Activated CD4-positive, alpha-beta T cell treated with anti-CD3 and anti-CD28 coated beads, Interleukin-2, amount 10 ng/mL, durations not matched to agents 24 days and 14 days (primary cell): ENCODE measurements at regions of chr14 and their contacts with region 1.

Region 1: GRCh38 chr14:36520601-36521525 is 831 bp upstream of the NKX2-1 start:
- DNase-seq: no peak
- H3K4me3 Mint-ChIP-seq: no peak overlapping the region
- H3K27ac Mint-ChIP-seq: no peak overlapping the region
- H3K4me1 Mint-ChIP-seq: peaks cover 2% of the 10 kb centered on the region
- H3K27me3 Mint-ChIP-seq: peaks cover 71% of the 10 kb centered on the region

Region 2: DNA sequence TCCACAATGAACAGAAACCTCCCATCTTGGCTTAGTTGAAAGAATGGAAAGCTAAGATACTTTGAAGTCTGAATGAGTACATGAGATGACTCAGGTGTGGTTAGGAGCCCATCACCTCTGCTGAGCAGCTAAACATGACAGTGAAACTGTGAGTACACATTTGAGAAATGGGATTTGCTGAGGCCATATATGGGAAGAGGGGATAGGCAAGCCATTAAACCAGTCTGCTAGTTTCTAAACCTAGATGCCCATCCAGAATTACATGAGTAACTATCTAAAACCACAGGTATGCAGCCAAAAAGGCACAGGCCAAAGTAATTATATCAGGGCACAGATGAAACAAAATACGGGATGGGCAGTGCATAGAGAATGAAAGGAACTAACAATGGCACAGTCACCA is 42.1 kb before region 1 on chr14:
- intact Hi-C with region 1: no loop called
- DNase-seq: no peak
- H3K4me3 Mint-ChIP-seq: no peak overlapping the region
- H3K27ac Mint-ChIP-seq: no peak overlapping the region
- H3K4me1 Mint-ChIP-seq: peaks cover 1% of the 10 kb centered on the region
- H3K27me3 Mint-ChIP-seq: peaks cover 5% of the 10 kb centered on the region

Region 3: GRCh38 chr14:36505181-36505815 is 15.6 kb before region 1 on chr14:
- intact Hi-C with region 1: loop called (anchors 2 kb)
- DNase-seq: no peak
- H3K4me3 Mint-ChIP-seq: no peak overlapping the region
- H3K27ac Mint-ChIP-seq: no peak overlapping the region
- H3K4me1 Mint-ChIP-seq: peaks cover 4% of the 10 kb centered on the region
- H3K27me3 Mint-ChIP-seq: peaks cover 80% of the 10 kb centered on the region

Region 4: DNA sequence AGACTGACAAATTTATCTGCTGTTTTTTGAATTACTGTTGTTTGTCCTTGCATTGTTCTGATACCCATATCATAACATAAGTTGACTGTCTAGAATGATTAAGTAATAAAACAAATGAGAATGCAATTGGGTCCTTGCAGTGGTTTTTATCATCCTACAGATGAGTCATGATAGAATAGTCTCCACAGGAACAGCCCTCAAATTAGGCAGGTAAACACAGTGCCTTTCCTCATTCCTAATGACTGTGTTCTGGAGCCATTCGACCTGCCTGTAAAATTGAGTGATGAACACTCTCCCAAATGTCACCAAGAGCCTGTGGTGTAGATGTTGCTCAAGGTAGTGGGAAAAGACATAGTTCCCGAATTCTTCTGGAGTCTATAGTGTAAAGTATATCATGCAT is 49.2 kb after region 1 on chr14:
- intact Hi-C with region 1: no loop called
- DNase-seq: no peak
- H3K4me3 Mint-ChIP-seq: no peak overlapping the region
- H3K27ac Mint-ChIP-seq: no peak overlapping the region
- H3K4me1 Mint-ChIP-seq: no peaks in the 10 kb centered on the region
- H3K27me3 Mint-ChIP-seq: peaks cover 5% of the 10 kb centered on the region

Region 5: GRCh38 chr14:36655963-36656686 is 135.3 kb after region 1 on chr14:
- intact Hi-C with region 1: loop called (anchors 2 kb)
- DNase-seq: peak; percentile 59
- H3K4me3 Mint-ChIP-seq: no peak overlapping the region
- H3K27ac Mint-ChIP-seq: no peak overlapping the region
- H3K4me1 Mint-ChIP-seq: peaks cover 7% of the 10 kb centered on the region
- H3K27me3 Mint-ChIP-seq: peaks cover 84% of the 10 kb centered on the region

Region 6: GRCh38 chr14:37594238-37594914 is 1073.5 kb after region 1 on chr14:
- intact Hi-C with region 1: loop called (anchors 5 kb)
- DNase-seq: peak; percentile 70
- H3K4me3 Mint-ChIP-seq: peak overlapping the region; percentile 62
- H3K27ac Mint-ChIP-seq: peak overlapping the region; percentile 76
- H3K4me1 Mint-ChIP-seq: peaks cover 9% of the 10 kb centered on the region
- H3K27me3 Mint-ChIP-seq: peaks cover 72% of the 10 kb centered on the region